Endothelial cell of umbilical vein (primary cell): ENCODE measurements at regions of chr2 and their contacts with region 1.

Region 1: GRCh38 chr2:20225294-20226151 is 593 bp upstream of the SDC1 start:
- DNase-seq: peak; percentile 60
- H3K4me3 ChIP-seq: peak overlapping the region; percentile 21 to 45 (median 45)
- H3K27ac ChIP-seq: no peak overlapping the region
- H3K4me1 ChIP-seq: peaks cover 6% of the 10 kb centered on the region
- H3K27me3 ChIP-seq: peaks cover 6 to 15% of the 10 kb centered on the region in 2 experiments
- CTCF ChIP-seq: peak; percentile 25 to 65
- POLR2A ChIP-seq: no peak

Region 2: GRCh38 chr2:20106746-20107145 is 118.8 kb before region 1 on chr2:
- CTCF ChIA-PET with region 1: interaction called, 42 read pairs
- POLR2A ChIA-PET with region 1: no interaction called
- dilution Hi-C with region 1: no loop called
- intact Hi-C with region 1: loop called (anchors 1 kb)
- DNase-seq: peak; percentile 27
- H3K4me3 ChIP-seq: peak overlapping the region in 1 of 3 experiments; percentile 26
- H3K27ac ChIP-seq: no peak overlapping the region
- H3K4me1 ChIP-seq: no peaks in the 10 kb centered on the region
- H3K27me3 ChIP-seq: peaks cover 2 to 3% of the 10 kb centered on the region in 2 experiments
- CTCF ChIP-seq: peak; percentile 47 to 80
- POLR2A ChIP-seq: no peak

Region 3: DNA sequence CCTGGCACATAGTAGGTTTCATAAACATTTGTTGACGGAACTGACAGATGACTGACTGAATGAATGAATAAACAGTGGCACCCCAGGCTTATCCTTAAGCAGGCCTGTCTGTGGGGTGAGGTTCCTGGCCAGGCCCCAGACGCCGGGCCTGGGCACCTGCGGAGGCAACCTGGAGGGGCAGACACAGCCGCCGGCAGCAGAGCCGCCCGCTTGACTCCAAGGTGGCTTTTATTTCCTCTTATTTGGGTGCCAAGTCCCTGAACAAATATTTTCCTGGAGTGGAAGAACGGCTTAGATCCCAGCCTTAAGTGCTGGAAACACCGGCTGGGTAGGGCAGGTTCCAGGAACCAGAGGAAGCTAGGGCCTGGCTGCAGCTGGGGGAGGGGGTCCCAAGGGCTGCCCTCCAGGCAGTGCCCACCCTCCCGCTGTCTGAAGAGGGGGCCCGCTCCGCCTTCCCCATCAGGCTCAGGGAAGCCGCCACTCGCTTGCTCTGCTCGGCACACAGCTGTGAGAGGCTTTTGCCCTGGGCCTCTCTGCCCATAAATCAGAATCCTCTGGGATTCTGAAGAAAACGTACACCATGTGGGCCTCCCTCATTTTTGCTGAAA is 28.9 kb before region 1 on chr2:
- CTCF ChIA-PET with region 1: interaction called, 11 read pairs
- POLR2A ChIA-PET with region 1: no interaction called
- dilution Hi-C with region 1: no loop called
- intact Hi-C with region 1: no loop called
- DNase-seq: no peak
- H3K4me3 ChIP-seq: no peak overlapping the region
- H3K27ac ChIP-seq: no peak overlapping the region
- H3K4me1 ChIP-seq: no peaks in the 10 kb centered on the region
- H3K27me3 ChIP-seq: no peaks in the 10 kb centered on the region
- CTCF ChIP-seq: no peak
- POLR2A ChIP-seq: no peak

Region 4: DNA sequence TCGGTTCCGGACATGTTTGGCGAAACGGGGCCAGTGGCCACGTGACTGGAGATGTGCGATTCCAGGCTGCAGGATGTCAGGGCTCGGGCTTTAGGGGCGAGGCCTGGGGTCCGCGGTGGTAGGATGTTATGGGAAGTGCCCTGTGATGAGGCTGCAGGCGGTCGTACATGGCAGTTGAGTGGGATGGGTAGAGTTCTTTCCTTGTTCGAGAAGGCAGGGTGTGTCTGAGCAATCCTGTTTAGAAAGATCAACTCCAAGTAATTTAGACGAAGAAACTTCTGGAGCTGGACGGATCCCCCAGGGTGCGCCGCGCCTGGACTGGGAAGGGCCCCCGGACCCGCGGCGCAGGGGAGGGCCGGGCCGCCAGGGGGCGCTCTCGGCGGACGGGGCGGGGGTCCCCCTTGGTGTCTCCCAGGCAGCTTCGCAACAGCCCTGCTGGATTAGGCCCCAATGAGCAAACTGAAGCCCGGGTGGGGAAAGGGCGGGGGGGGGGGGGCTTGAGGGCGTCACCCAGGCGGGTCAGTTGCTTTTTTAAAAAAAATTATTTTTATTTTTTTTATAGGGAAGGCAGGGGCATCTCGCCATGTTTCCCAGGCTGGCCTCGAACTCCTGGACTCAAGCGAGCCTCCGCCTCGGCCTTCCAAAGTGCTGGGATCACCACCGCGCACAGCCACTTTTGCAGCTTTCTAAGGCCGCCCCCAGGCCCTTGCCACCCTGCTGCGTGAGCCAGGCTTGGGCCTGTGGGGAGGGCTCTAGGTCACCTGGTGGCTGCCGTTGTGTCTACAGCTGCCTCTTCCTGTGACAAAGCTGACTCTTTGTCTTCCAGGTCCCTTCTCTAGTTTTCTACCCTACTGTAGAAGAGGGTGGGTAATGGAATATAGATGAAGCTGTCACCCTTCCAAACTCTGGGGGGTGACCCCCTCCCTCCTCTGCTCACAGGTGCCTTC is 16.8 kb after region 1 on chr2:
- CTCF ChIA-PET with region 1: interaction called, 11 read pairs
- POLR2A ChIA-PET with region 1: no interaction called
- dilution Hi-C with region 1: no loop called
- intact Hi-C with region 1: no loop called
- DNase-seq: no peak
- H3K4me3 ChIP-seq: no peak overlapping the region
- H3K27ac ChIP-seq: no peak overlapping the region
- H3K4me1 ChIP-seq: no peaks in the 10 kb centered on the region
- H3K27me3 ChIP-seq: peaks cover 2 to 3% of the 10 kb centered on the region in 2 experiments
- CTCF ChIP-seq: peak; percentile 49 to 52
- POLR2A ChIP-seq: no peak

Region 5: DNA sequence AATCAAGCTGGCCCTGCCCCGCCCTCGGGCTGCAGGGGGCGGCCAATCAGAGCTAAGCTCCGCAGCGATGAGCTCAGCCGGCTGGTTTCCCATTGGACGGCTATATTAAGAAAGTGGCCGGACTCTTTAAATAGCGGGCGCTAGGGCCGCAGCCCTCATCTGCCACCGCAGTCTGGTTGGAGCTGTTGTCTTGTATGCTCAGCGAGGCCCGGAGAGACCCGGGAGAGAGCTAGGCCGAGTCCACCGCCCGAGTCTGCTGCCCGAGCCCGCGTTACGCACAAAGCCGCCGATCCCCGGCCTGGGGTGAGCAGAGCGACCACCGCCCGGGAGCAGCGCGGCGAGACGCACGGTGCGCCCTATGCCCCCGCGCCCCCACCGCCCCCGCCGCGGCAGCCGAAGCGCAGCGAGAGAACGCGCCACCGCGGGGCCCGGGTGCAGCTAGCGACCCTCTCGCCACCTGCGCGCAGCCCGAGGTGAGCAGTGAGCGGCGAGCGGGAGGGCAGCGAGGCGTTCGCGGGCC is 221.5 kb after region 1 on chr2 and contains the start of gene RHOB:
- CTCF ChIA-PET with region 1: no interaction called
- POLR2A ChIA-PET with region 1: no interaction called
- dilution Hi-C with region 1: no loop called
- intact Hi-C with region 1: no loop called
- DNase-seq: peak; percentile 99
- H3K4me3 ChIP-seq: peak within 1 kb of the TSS; percentile 66 to 96 (median 94)
- H3K27ac ChIP-seq: peak within 1 kb of the TSS; percentile 79
- H3K4me1 ChIP-seq: peaks cover 27% of the 10 kb centered on the region
- H3K27me3 ChIP-seq: no peaks in the 10 kb centered on the region
- CTCF ChIP-seq: no peak
- POLR2A ChIP-seq: peak; percentile 100
- total RNA-seq, gene RHOB: 830 and 937 TPM in 2 replicates